ENCODE measurements at regions of chr7 and their contacts with region 1.

Region 1: GRCh38 chr7:152436111-152436930 is 518 bp upstream of the KMT2C start:
- DNase-seq: peak; percentile 79 to 92 (median 87)
- ATAC-seq: peak; percentile 87
- H3K4me3 ChIP-seq: peak overlapping the region; percentile 75
- H3K4me3 Mint-ChIP-seq: peak overlapping the region; percentile 79 to 93 (median 88)
- H3K27ac ChIP-seq: peak overlapping the region; percentile 97
- H3K27ac Mint-ChIP-seq: peak overlapping the region; percentile 85 to 97 (median 93)
- H3K4me1 ChIP-seq: peaks cover 5 to 7% of the 10 kb centered on the region in 2 donors
- H3K4me1 Mint-ChIP-seq: peaks cover 15 to 35% (median 24%) of the 10 kb centered on the region in 7 donors
- H3K27me3 ChIP-seq: no peaks in the 10 kb centered on the region
- H3K27me3 Mint-ChIP-seq: no peaks in the 10 kb centered on the region

Region 2: GRCh38 chr7:152336754-152337368 is 99.5 kb before region 1 on chr7:
- CTCF ChIA-PET with region 1: no interaction called
- POLR2A ChIA-PET with region 1: interaction called, 3 read pairs
- intact Hi-C with region 1: loop called (anchors 1 kb)
- DNase-seq: peak in 7 of 9 donors; percentile 13 to 42 (median 34)
- ATAC-seq: peak; percentile 88
- H3K4me3 ChIP-seq: peak overlapping the region; percentile 27
- H3K4me3 Mint-ChIP-seq: peak overlapping the region in 8 of 10 donors; percentile 49 to 88 (median 84)
- H3K27ac ChIP-seq: peak overlapping the region; percentile 55
- H3K27ac Mint-ChIP-seq: peak overlapping the region in 8 of 9 donors; percentile 34 to 86 (median 73)
- H3K4me1 ChIP-seq: peaks cover 15 to 19% of the 10 kb centered on the region in 2 donors
- H3K4me1 Mint-ChIP-seq: peaks cover 38 to 85% (median 68%) of the 10 kb centered on the region in 7 donors
- H3K27me3 ChIP-seq: no peaks in the 10 kb centered on the region
- H3K27me3 Mint-ChIP-seq: no peaks in the 10 kb centered on the region

Region 3: DNA sequence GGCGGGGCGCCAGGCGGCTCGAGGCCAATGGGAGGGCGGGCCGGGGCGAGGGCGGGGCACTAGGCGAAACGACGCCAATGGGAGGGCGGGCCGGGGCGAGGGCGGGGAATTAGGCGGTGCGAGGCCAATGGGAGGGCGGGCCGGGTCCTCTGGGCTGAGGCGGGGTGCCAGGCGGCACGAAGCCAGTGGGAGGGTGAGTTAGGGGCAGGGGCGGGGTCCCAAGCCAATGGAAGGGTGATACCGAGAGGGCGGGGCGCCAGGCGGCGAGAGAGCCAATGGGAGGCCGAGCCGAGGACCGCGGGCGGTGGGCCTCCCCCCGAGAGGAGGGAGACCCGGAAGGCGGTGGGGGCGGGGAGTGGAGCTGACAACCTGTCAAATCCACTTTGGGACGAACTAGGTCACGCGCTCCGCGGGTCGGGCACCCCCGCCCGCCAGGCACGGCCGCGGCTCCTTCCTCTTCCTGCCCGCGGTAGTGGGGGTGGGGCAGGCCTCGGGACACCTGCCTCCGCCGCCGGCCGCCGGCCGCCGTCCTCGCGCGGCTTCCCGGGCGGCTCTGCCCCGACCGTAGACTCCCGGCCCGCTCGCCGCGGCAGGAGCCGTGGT is 27.5 kb after region 1 on chr7:
- CTCF ChIA-PET with region 1: no interaction called
- POLR2A ChIA-PET with region 1: interaction called, 25 read pairs
- intact Hi-C with region 1: loop called (anchors 1 kb)
- DNase-seq: peak; percentile 99 to 100 (median 100)
- ATAC-seq: peak; percentile 96
- H3K4me3 ChIP-seq: peak overlapping the region; percentile 82
- H3K4me3 Mint-ChIP-seq: peak overlapping the region; percentile 64 to 96 (median 92)
- H3K27ac ChIP-seq: peak overlapping the region; percentile 99
- H3K27ac Mint-ChIP-seq: peak overlapping the region in 7 of 9 donors; percentile 62 to 93 (median 88)
- H3K4me1 ChIP-seq: peaks cover 5% of the 10 kb centered on the region in 2 donors
- H3K4me1 Mint-ChIP-seq: peaks cover 5 to 17% (median 7%) of the 10 kb centered on the region in 7 donors
- H3K27me3 ChIP-seq: no peaks in the 10 kb centered on the region
- H3K27me3 Mint-ChIP-seq: no peaks in the 10 kb centered on the region

Region 4: DNA sequence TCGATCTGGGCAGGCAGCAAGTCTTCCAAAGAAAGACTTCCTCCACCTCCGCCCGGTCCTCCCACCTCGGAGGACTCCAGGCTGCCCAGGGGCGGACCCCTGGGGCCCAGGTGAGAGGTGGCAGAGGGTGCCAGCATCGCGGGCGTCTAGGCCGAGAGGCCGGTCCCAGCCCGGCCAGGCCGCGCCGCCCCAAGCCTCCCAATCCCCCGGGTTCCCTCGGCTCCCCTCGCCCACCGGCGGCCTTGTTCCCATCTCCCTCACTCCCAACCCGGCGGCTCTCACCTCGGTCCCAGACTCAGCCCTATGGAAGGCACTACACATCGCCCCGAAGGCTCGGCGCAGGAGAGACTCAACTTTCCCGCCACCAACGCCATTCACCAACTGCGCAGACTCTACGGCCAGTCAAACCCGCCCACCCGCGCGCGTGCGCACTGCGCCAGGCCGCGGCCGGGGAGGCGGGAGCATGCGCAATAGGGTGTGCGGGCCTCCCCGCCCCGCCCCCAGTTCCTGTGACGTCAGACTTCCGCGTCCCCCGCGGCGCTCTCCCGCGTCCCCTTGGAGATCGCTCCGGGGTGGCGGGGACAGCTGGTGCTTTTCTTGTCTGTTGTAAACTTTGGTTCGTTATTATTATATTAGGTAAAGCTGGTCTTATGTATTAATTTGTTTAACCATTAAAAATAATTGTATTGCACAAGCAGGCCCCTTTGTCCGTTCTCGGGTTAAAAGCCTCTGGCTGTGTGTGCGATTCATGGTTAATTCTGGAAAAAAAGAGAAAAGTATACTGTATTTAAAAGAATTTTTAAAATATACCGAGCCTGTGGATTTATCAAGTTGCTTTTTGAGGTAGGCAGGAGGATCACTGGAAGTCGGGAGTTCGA is 239.7 kb after region 1 on chr7 and contains the start of gene XRCC2:
- CTCF ChIA-PET with region 1: no interaction called
- POLR2A ChIA-PET with region 1: no interaction called
- intact Hi-C with region 1: loop called (anchors 1 kb)
- DNase-seq: peak; percentile 85 to 100 (median 97)
- ATAC-seq: peak; percentile 95
- H3K4me3 ChIP-seq: peak within 1 kb of the TSS; percentile 91
- H3K4me3 Mint-ChIP-seq: peak within 1 kb of the TSS; percentile 88 to 99 (median 94)
- H3K27ac ChIP-seq: peak within 1 kb of the TSS; percentile 87
- H3K27ac Mint-ChIP-seq: peak within 1 kb of the TSS; percentile 75 to 98 (median 91)
- H3K4me1 ChIP-seq: peaks cover 5 to 8% of the 10 kb centered on the region in 2 donors
- H3K4me1 Mint-ChIP-seq: peaks cover 9 to 22% (median 12%) of the 10 kb centered on the region in 7 donors
- H3K27me3 ChIP-seq: no peaks in the 10 kb centered on the region
- H3K27me3 Mint-ChIP-seq: no peaks in the 10 kb centered on the region
- total RNA-seq, gene XRCC2: 0.48 to 13.8 (median 1.2) TPM

Measured in naive thymus-derived CD4-positive, alpha-beta T cell (primary cell).